MCF 10A (cell line): ENCODE measurements at regions of chr10 and their contacts with region 1.

Region 1: DNA sequence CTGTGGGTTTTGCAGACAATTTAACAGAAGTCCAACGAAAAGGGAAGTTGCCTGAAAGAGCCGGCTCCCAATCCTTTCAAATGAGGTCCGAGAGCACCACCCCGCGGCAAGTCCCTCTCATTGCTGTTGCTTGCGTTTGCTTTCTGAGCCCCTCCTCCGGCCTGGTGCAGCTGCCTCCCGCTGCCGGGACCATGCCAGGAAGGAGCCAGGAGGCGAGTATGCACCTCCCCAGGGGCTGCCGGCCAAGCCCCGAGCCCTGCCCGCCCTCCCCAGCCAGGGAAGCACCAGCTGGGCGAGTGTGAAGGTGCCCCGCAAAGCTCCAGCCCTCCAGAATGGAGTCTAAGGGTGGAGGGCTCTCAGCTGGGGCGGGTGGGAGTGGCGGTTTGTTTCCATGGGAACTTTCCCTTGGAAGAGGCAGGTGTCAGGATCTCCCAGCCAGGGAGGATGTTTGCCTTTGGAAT is 25.8 kb upstream of the PPP2R2D start:
- DNase-seq: peak; percentile 80
- H3K4me3 Mint-ChIP-seq: no peak overlapping the region
- H3K27ac Mint-ChIP-seq: no peak overlapping the region
- H3K4me1 Mint-ChIP-seq: no peaks in the 10 kb centered on the region
- H3K27me3 Mint-ChIP-seq: peaks cover 40% of the 10 kb centered on the region
- CTCF ChIP-seq: peak; percentile 80

Region 2: GRCh38 chr10:130190055-130190736 is 1684.8 kb before region 1 on chr10:
- CTCF ChIA-PET with region 1: interaction called, 5 read pairs
- POLR2A ChIA-PET with region 1: no interaction called
- intact Hi-C with region 1: loop called (anchors 1 kb)
- DNase-seq: peak; percentile 80
- H3K4me3 Mint-ChIP-seq: peak overlapping the region; percentile 10
- H3K27ac Mint-ChIP-seq: no peak overlapping the region
- H3K4me1 Mint-ChIP-seq: peaks cover 6% of the 10 kb centered on the region
- H3K27me3 Mint-ChIP-seq: no peaks in the 10 kb centered on the region
- CTCF ChIP-seq: peak; percentile 100

Region 3: GRCh38 chr10:130254662-130255061 is 1620.4 kb before region 1 on chr10:
- CTCF ChIA-PET with region 1: interaction called, 6 read pairs
- POLR2A ChIA-PET with region 1: no interaction called
- intact Hi-C with region 1: loop called (anchors 10 kb)
- DNase-seq: peak; percentile 6
- H3K4me3 Mint-ChIP-seq: no peak overlapping the region
- H3K27ac Mint-ChIP-seq: no peak overlapping the region
- H3K4me1 Mint-ChIP-seq: no peaks in the 10 kb centered on the region
- H3K27me3 Mint-ChIP-seq: no peaks in the 10 kb centered on the region
- CTCF ChIP-seq: peak; percentile 33

Region 4: GRCh38 chr10:130547368-130547767 is 1327.7 kb before region 1 on chr10:
- CTCF ChIA-PET with region 1: no interaction called
- POLR2A ChIA-PET with region 1: no interaction called
- intact Hi-C with region 1: loop called (anchors 1 kb)
- DNase-seq: peak; percentile 19
- H3K4me3 Mint-ChIP-seq: no peak overlapping the region
- H3K27ac Mint-ChIP-seq: peak overlapping the region; percentile 6
- H3K4me1 Mint-ChIP-seq: peaks cover 13% of the 10 kb centered on the region
- H3K27me3 Mint-ChIP-seq: no peaks in the 10 kb centered on the region
- CTCF ChIP-seq: peak; percentile 39

Region 5: DNA sequence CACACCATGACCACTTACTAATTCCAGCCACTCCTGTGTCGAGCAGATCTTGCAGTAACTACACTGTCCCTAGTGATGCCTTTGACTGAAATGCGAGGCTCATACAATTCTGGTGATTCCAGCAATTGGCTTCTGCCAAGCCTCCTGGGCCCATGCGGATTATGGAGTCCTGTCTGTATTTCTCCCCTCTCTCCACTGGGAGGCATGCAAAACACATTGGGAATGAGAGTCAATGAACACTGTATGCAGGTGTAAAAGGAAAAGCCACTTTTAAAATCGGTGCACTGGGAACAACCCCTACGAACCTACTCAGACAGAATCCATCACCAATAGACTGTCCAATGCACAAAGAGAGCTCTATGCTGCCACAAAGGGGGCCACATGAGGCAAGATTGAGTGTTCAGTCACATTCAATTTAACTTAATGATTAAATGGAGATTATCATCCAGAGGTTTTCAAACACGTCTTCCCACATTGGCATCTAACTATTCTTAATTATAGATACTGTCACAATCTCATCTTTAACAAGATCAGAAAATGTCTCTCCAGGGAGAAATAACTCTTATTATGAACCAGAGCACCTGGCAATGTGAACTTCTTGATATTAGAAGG is 1188.2 kb before region 1 on chr10:
- CTCF ChIA-PET with region 1: interaction called, 5 read pairs
- POLR2A ChIA-PET with region 1: no interaction called
- intact Hi-C with region 1: loop called (anchors 2 kb)
- DNase-seq: peak; percentile 21
- H3K4me3 Mint-ChIP-seq: no peak overlapping the region
- H3K27ac Mint-ChIP-seq: no peak overlapping the region
- H3K4me1 Mint-ChIP-seq: no peaks in the 10 kb centered on the region
- H3K27me3 Mint-ChIP-seq: no peaks in the 10 kb centered on the region
- CTCF ChIP-seq: peak; percentile 38

Region 6: GRCh38 chr10:131947631-131948347 is 72.8 kb after region 1 on chr10:
- CTCF ChIA-PET with region 1: no interaction called
- POLR2A ChIA-PET with region 1: no interaction called
- intact Hi-C with region 1: no loop called
- DNase-seq: peak; percentile 73
- H3K4me3 Mint-ChIP-seq: peak overlapping the region; percentile 48
- H3K27ac Mint-ChIP-seq: peak overlapping the region; percentile 78
- H3K4me1 Mint-ChIP-seq: peaks cover 24% of the 10 kb centered on the region
- H3K27me3 Mint-ChIP-seq: no peaks in the 10 kb centered on the region
- CTCF ChIP-seq: no peak

Region 7: GRCh38 chr10:131961777-131962662 is 87.0 kb after region 1 on chr10:
- CTCF ChIA-PET with region 1: no interaction called
- POLR2A ChIA-PET with region 1: no interaction called
- intact Hi-C with region 1: no loop called
- DNase-seq: no peak
- H3K4me3 Mint-ChIP-seq: no peak overlapping the region
- H3K27ac Mint-ChIP-seq: peak overlapping the region; percentile 16
- H3K4me1 Mint-ChIP-seq: no peaks in the 10 kb centered on the region
- H3K27me3 Mint-ChIP-seq: no peaks in the 10 kb centered on the region
- CTCF ChIP-seq: no peak